Esophagus muscularis mucosa (tissue), 4 donors: ENCODE measurements at regions of chr5 and their contacts with region 1.

Region 1: DNA sequence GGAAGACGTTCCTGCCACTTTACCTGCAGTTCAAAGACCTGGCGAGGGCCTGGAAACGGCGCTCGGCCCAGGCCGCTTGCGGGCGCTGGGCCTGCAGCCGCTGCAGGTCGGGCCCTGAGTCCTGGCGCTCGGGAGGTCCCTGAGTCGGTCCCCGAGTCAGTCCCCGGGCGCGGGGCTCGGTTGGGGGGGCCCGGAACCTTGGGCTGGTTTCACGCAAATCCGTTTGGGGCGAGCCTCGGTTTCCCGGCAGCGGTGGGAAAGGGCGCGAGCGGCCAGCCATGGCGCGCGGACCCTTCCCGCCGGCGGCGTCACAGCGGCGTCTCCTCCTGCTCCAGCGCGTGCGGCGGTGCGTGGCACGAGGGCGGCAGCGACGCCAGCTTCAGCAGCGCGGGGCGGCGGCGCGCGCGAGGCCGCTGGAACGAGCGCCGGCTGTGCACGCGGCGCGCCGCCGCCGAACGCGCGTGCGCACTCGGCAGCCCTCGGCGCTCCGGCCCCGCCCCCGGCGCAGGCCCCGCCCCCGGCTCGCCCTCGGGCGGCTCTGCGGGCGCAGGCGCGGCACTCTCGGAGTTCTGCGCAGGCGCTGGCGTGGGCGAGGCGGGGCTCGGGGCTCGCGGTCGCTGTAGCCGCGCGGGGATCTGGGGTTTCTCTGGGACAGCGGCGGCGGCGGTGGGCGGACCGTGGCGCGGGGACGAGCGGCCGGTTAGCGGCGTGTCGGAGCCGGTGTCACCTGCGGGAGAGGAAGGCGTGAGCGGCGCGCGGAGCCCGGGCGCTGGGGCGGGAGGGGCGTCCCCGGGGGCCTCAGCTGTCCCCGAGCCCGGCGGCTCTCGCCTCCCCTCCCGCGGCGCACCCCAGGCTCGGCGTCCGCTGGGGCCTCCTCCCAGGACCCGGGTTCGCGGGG is 29.9 kb downstream of the EXOC3 start:
- DNase-seq: no peak
- H3K4me3 ChIP-seq: peak overlapping the region; percentile 83 to 98 (median 91)
- H3K27ac ChIP-seq: peak overlapping the region; percentile 78 to 83 (median 81)
- H3K4me1 ChIP-seq: peaks cover 23 to 49% (median 38%) of the 10 kb centered on the region in 4 donors
- H3K27me3 ChIP-seq: peaks cover 0 to 32% (median 26%) of the 10 kb centered on the region in 4 donors
- CTCF ChIP-seq: no peak
- EP300 ChIP-seq: no peak
- POLR2A ChIP-seq: no peak

Region 2: GRCh38 chr5:611721-612486 is 139.0 kb after region 1 on chr5 and contains the start of gene CEP72:
- intact Hi-C with region 1: loop called (anchors 5 kb)
- DNase-seq: peak; percentile 95
- H3K4me3 ChIP-seq: peak within 1 kb of the TSS; percentile 69 to 98 (median 86)
- H3K27ac ChIP-seq: peak within 1 kb of the TSS; percentile 35 to 55 (median 48)
- H3K4me1 ChIP-seq: peaks cover 10 to 25% (median 18%) of the 10 kb centered on the region in 4 donors
- H3K27me3 ChIP-seq: peaks cover 0 to 21% (median 0%) of the 10 kb centered on the region in 4 donors
- CTCF ChIP-seq: no peak
- EP300 ChIP-seq: no peak
- POLR2A ChIP-seq: no peak
- total RNA-seq, gene CEP72: 0.83 to 1.8 (median 1.5) TPM

Region 3: DNA sequence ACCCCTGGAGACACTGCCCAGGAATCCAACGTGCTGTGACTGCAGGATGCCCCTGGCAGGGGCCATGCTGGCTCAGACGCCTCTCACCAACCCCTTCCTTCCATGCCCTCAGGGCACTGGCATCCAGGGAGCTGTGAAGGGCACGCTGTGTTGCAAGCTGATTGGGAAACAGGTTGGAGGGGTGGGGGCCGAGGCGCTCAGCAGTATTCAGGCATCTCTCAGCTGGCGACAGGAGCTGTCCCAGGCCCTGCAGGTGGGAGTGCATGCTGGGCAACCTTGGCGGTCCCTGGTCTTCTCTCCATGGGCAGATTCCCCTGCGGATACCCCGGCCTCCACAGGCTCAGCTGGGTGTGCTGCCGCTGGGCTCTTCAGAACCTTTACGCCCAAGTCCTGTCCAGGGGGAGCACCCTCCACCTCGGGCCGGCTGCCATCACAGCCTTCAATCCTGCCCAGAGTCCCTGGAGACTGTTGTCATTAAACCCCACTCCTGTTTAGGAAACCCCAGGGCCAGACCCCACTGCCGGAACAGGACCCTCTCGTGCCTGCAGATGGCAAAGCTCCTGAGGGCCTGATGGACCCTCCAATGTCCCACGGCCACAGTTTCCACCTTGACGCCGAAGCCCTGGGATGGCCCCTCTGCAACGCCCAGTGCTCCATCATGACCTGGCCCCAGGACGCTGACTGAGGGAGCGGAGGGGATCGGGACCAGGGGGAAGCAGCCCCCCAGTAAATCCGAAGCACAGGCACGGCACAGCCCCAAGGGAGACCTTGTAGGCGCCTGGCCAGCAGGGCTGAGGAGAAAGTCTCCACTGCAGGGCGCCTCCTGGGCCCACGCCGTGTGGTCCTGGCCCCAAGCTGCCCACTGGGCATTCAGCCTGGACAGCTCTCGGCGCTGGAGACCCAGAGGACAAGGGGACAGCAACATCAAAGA is 210.9 kb after region 1 on chr5:
- intact Hi-C with region 1: no loop called
- DNase-seq: no peak
- H3K4me3 ChIP-seq: no peak overlapping the region
- H3K27ac ChIP-seq: peak overlapping the region in 2 of 4 donors; percentile 64 to 65
- H3K4me1 ChIP-seq: peaks cover 30 to 59% (median 49%) of the 10 kb centered on the region in 4 donors
- H3K27me3 ChIP-seq: no peaks in the 10 kb centered on the region
- CTCF ChIP-seq: no peak
- EP300 ChIP-seq: no peak
- POLR2A ChIP-seq: no peak